ENCODE measurements at regions of chr3 and their contacts with region 1.

Region 1: GRCh38 chr3:46089237-46090011 is 62.1 kb upstream of the XCR1 start:
- DNase-seq: peak; percentile 91
- H3K4me3 ChIP-seq: peak overlapping the region in 1 of 8 donors; percentile 59
- H3K27ac ChIP-seq: peak overlapping the region; percentile 35 to 93 (median 88)
- H3K4me1 ChIP-seq: peaks cover 21 to 78% (median 57%) of the 10 kb centered on the region in 6 donors
- H3K27me3 ChIP-seq: no peaks in the 10 kb centered on the region
- CTCF ChIP-seq: peak in 2 of 11 experiments; percentile 6 to 16
- POLR2A ChIP-seq: no peak

Region 2: GRCh38 chr3:46027736-46028397 is 61.6 kb before region 1 on chr3:
- intact Hi-C with region 1: no loop called
- DNase-seq: no peak
- H3K4me3 ChIP-seq: no peak overlapping the region
- H3K27ac ChIP-seq: no peak overlapping the region
- H3K4me1 ChIP-seq: peaks cover 0 to 7% (median 2%) of the 10 kb centered on the region in 6 donors
- H3K27me3 ChIP-seq: no peaks in the 10 kb centered on the region
- CTCF ChIP-seq: no peak
- POLR2A ChIP-seq: no peak

Region 3: GRCh38 chr3:46208167-46208704 is 118.8 kb after region 1 on chr3 and contains the start of gene CCR1:
- intact Hi-C with region 1: loop called (anchors 5 kb)
- DNase-seq: peak; percentile 87
- H3K4me3 ChIP-seq: peak within 1 kb of the TSS; percentile 10 to 66 (median 34)
- H3K27ac ChIP-seq: peak within 1 kb of the TSS; percentile 8 to 85 (median 78)
- H3K4me1 ChIP-seq: peaks cover 3 to 79% (median 35%) of the 10 kb centered on the region in 6 donors
- H3K27me3 ChIP-seq: no peaks in the 10 kb centered on the region
- CTCF ChIP-seq: peak; percentile 28 to 78 (median 66)
- POLR2A ChIP-seq: no peak
- total RNA-seq, gene CCR1: 52.6 to 94.5 (median 58.1) TPM

Measured in spleen (tissue), 13 donors.